Naive thymus-derived CD4-positive, alpha-beta T cell (primary cell): ENCODE measurements at regions of chr3 and their contacts with region 1.

Region 1: GRCh38 chr3:13479581-13480339 is at the start of gene HDAC11:
- DNase-seq: peak; percentile 93 to 98 (median 95)
- ATAC-seq: peak; percentile 98
- H3K4me3 ChIP-seq: peak within 1 kb of the TSS; percentile 97
- H3K4me3 Mint-ChIP-seq: peak within 1 kb of the TSS; percentile 90 to 97 (median 94)
- H3K27ac ChIP-seq: peak within 1 kb of the TSS; percentile 98
- H3K27ac Mint-ChIP-seq: peak within 1 kb of the TSS; percentile 82 to 97 (median 94)
- H3K4me1 ChIP-seq: peaks cover 8 to 15% of the 10 kb centered on the region in 2 donors
- H3K4me1 Mint-ChIP-seq: peaks cover 4 to 22% (median 15%) of the 10 kb centered on the region in 7 donors
- H3K27me3 ChIP-seq: no peaks in the 10 kb centered on the region
- H3K27me3 Mint-ChIP-seq: peaks cover 0 to 13% (median 0%) of the 10 kb centered on the region in 5 donors
- total RNA-seq, gene HDAC11: 1.2 to 8.0 (median 7.3) TPM

Region 2: DNA sequence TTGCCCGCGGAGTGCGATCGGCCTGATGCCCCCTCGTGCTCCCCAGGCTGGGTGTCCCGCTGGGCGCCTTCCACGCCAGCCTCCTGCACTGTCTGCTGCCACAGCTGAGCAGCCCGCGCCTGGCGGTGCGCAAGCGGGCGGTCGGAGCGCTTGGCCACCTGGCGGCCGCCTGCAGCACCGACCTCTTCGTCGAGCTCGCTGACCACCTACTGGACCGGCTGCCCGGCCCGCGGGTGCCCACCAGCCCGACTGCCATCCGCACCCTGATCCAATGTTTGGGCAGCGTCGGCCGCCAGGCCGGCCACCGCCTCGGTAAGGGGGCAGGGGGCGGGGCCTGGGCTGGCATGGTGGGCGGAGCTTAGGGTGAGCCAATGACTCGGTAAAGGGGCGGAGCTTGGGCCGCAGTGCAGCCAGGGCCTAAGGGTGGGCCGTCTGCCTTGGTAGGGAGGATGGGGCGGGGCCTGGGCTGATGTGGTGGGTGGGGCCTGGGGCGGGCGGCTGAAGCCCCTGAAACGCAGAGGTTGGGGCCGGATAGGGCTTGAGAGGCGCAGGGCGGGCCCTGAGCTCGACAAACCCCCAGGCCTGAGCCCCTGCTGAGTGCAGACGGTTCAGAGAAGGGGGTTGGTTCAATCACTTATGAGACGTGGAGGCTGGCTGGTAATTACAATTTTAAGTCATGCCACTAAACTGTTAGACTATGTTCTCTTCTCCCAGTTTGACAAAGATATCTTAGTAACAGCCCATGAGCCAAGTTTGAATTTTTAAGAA is 669.6 kb before region 1 on chr3:
- CTCF ChIA-PET with region 1: no interaction called
- POLR2A ChIA-PET with region 1: no interaction called
- intact Hi-C with region 1: loop called in 1 of 2 experiments (anchors 1 kb)
- DNase-seq: peak; percentile 89 to 98 (median 94)
- ATAC-seq: peak; percentile 99
- H3K4me3 ChIP-seq: peak overlapping the region; percentile 79
- H3K4me3 Mint-ChIP-seq: peak overlapping the region; percentile 63 to 82 (median 77)
- H3K27ac ChIP-seq: peak overlapping the region; percentile 68
- H3K27ac Mint-ChIP-seq: peak overlapping the region; percentile 23 to 85 (median 64)
- H3K4me1 ChIP-seq: peaks cover 3 to 7% of the 10 kb centered on the region in 2 donors
- H3K4me1 Mint-ChIP-seq: peaks cover 4 to 16% (median 12%) of the 10 kb centered on the region in 7 donors
- H3K27me3 ChIP-seq: no peaks in the 10 kb centered on the region
- H3K27me3 Mint-ChIP-seq: peaks cover 0 to 11% (median 0%) of the 10 kb centered on the region in 5 donors

Region 3: DNA sequence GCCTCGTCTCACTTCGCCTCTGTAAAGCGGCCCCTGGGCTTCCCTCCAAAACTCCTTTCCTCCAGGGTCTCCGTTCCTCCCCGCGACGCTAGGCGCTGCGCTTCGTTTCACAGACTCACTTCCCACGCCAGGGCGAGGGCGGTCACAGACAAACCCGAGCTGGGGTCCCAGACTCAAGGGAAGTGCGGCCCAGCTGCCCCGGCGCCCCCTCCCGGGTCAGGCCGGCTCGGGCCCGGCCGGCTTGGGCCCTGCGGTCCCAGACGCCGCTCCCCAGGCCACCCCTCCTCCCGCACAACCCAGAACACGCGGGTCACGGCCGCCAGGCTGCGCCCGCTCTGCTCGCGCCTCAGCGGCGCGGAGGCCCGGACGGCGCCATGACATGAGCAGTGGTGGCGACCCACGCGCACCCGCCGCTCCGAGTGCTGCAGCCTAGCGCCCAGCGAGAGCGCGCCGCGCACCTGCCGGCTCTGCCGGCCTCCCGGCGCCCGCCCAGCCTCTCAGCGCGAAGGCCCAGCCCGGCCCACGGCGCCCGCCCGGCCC is 60.2 kb before region 1 on chr3:
- CTCF ChIA-PET with region 1: no interaction called
- POLR2A ChIA-PET with region 1: interaction called, 4 read pairs
- intact Hi-C with region 1: loop called (anchors 1 to 2 kb)
- DNase-seq: peak; percentile 58 to 69 (median 64)
- ATAC-seq: peak; percentile 74
- H3K4me3 ChIP-seq: peak overlapping the region; percentile 70
- H3K4me3 Mint-ChIP-seq: peak overlapping the region; percentile 77 to 100 (median 90)
- H3K27ac ChIP-seq: peak overlapping the region; percentile 96
- H3K27ac Mint-ChIP-seq: peak overlapping the region; percentile 83 to 97 (median 92)
- H3K4me1 ChIP-seq: peaks cover 55 to 60% of the 10 kb centered on the region in 2 donors
- H3K4me1 Mint-ChIP-seq: peaks cover 41 to 81% (median 69%) of the 10 kb centered on the region in 7 donors
- H3K27me3 ChIP-seq: no peaks in the 10 kb centered on the region
- H3K27me3 Mint-ChIP-seq: no peaks in the 10 kb centered on the region

Region 4: GRCh38 chr3:13427662-13428603 is 51.8 kb before region 1 on chr3:
- CTCF ChIA-PET with region 1: no interaction called
- POLR2A ChIA-PET with region 1: interaction called, 5 read pairs
- intact Hi-C with region 1: loop called in 1 of 2 experiments (anchors 2 kb)
- DNase-seq: peak in 7 of 9 donors; percentile 61 to 73 (median 66)
- ATAC-seq: peak; percentile 95
- H3K4me3 ChIP-seq: peak overlapping the region; percentile 6
- H3K4me3 Mint-ChIP-seq: peak overlapping the region; percentile 22 to 82 (median 68)
- H3K27ac ChIP-seq: peak overlapping the region; percentile 71
- H3K27ac Mint-ChIP-seq: peak overlapping the region; percentile 69 to 98 (median 91)
- H3K4me1 ChIP-seq: peaks cover 10 to 35% of the 10 kb centered on the region in 2 donors
- H3K4me1 Mint-ChIP-seq: peaks cover 18 to 55% (median 42%) of the 10 kb centered on the region in 7 donors
- H3K27me3 ChIP-seq: no peaks in the 10 kb centered on the region
- H3K27me3 Mint-ChIP-seq: no peaks in the 10 kb centered on the region

Region 5: DNA sequence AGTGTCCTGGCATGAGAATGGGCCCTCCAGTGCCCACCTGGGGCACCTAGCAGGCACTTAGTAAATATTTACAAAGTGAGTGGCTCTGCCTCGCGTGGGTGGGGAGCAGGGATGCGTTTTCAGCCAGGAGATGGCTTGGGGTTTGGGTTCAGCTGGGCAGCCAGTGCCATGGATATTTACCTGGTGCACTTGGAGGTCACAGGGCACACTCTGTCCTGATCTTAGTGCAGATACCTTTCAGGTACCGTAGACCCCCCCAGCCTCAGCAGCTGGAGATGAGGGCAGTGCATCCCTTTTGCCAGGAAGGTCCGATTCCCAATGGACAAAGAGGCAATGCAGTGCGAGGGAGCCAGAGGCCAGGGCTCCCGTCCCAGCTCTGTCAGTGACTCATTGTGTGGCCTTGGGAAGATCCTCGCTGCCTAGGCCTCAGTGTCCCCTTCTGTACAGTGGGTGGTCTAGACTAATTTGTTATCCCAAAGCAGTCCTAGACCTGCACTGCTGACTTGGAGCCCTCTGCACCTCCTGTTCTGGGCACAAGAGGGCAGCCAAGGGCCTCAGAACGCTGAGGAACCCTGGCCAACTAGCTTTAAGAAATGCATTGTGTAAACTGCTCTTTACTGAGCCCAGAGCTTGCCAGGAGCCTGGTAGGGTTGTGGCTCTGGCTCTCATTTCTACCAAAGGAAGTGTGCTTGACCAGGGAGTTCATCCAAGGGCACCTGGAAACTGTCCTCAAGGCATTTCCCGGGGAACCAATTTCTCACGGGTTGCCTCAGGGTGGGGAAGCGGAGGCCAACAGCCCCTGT is 16.4 kb after region 1 on chr3:
- CTCF ChIA-PET with region 1: no interaction called
- POLR2A ChIA-PET with region 1: interaction called, 4 read pairs
- intact Hi-C with region 1: loop called in 1 of 2 experiments (anchors 1 kb)
- DNase-seq: peak; percentile 47 to 73 (median 66)
- ATAC-seq: peak; percentile 89
- H3K4me3 ChIP-seq: no peak overlapping the region
- H3K4me3 Mint-ChIP-seq: no peak overlapping the region
- H3K27ac ChIP-seq: no peak overlapping the region
- H3K27ac Mint-ChIP-seq: no peak overlapping the region
- H3K4me1 ChIP-seq: no peaks in the 10 kb centered on the region
- H3K4me1 Mint-ChIP-seq: peaks cover 0 to 7% (median 3%) of the 10 kb centered on the region in 7 donors
- H3K27me3 ChIP-seq: no peaks in the 10 kb centered on the region
- H3K27me3 Mint-ChIP-seq: no peaks in the 10 kb centered on the region

Region 6: DNA sequence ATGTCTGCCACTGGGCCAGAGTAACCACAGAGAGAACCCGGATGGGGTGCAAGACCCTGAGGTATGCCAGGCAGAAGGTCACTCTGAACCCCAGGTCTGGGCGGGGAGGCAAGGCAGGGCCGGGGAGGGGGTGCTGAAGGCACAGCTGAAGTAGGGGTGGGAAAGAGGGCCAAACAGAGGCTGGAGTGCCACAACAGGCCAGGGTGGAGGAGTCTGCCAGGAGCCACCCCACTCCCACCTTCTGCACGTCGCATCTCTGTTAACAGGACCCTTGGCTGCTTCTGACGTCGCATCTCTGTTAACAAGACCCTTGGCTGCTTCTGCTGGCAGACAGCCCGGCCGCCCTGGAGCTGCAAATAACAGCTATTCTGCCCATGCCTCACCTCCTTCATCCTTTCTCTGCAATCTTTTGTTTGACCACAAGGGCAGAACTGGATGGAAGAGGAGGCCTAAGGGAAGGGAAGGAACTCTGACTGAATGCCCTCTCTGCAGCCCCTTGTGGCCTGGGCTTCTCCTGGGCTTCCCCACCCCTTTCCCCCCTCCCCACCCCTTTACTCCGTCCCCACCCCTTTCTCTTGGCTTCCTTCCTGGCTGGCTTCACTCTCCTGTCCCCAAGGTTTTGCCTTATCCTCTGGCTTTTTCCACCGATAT is 48.6 kb after region 1 on chr3:
- CTCF ChIA-PET with region 1: no interaction called
- POLR2A ChIA-PET with region 1: no interaction called
- intact Hi-C with region 1: no loop called
- DNase-seq: no peak
- ATAC-seq: no peak
- H3K4me3 ChIP-seq: no peak overlapping the region
- H3K4me3 Mint-ChIP-seq: no peak overlapping the region
- H3K27ac ChIP-seq: no peak overlapping the region
- H3K27ac Mint-ChIP-seq: no peak overlapping the region
- H3K4me1 ChIP-seq: no peaks in the 10 kb centered on the region
- H3K4me1 Mint-ChIP-seq: peaks cover 0 to 3% (median 0%) of the 10 kb centered on the region in 7 donors
- H3K27me3 ChIP-seq: no peaks in the 10 kb centered on the region
- H3K27me3 Mint-ChIP-seq: peaks cover 0 to 12% (median 0%) of the 10 kb centered on the region in 5 donors

Region 7: DNA sequence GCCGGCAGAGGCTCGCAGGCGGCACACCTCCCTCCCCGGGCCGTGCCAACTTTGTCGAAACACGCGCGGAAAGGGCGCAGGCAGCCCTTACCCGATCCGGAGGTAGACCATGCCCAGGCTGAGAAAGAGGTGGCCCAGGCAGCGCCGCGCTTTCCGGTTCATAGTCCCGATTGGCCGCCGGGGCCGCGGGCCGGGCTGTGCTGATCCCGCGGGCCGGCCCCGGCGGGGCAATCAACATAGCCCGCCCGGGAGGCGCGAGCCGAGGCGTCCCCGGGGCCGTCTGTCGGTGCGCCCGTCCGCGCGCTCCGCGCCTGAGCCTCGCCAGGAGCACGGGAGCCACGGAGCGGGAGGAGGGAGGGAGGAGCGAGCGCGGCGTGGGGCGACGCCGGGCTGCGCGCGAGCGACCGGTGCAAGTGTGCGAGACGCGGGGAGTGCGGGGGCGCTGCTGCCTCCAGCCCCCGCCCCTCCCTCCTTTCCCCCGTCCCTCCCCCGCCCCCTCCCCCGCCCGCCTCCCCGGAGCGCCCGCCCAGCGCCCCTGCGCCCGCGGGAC is 400.0 kb after region 1 on chr3 and contains the start of gene WNT7A:
- CTCF ChIA-PET with region 1: interaction called, 3 read pairs
- POLR2A ChIA-PET with region 1: interaction called, 7 read pairs
- intact Hi-C with region 1: loop called in 1 of 2 experiments (anchors 1 kb)
- DNase-seq: peak in 5 of 9 donors; percentile 33 to 70 (median 49)
- ATAC-seq: peak; percentile 38
- H3K4me3 ChIP-seq: peak within 1 kb of the TSS; percentile 75
- H3K4me3 Mint-ChIP-seq: peak within 1 kb of the TSS; percentile 50 to 95 (median 92)
- H3K27ac ChIP-seq: peak within 1 kb of the TSS; percentile 75
- H3K27ac Mint-ChIP-seq: peak within 1 kb of the TSS in 7 of 9 donors; percentile 45 to 92 (median 82)
- H3K4me1 ChIP-seq: peaks cover 5 to 6% of the 10 kb centered on the region in 2 donors
- H3K4me1 Mint-ChIP-seq: peaks cover 0 to 29% (median 23%) of the 10 kb centered on the region in 7 donors
- H3K27me3 ChIP-seq: peaks cover 0 to 6% of the 10 kb centered on the region in 2 donors
- H3K27me3 Mint-ChIP-seq: peaks cover 0 to 78% (median 34%) of the 10 kb centered on the region in 5 donors
- total RNA-seq, gene WNT7A: 0.15 to 21.8 (median 18.8) TPM

Region 8: DNA sequence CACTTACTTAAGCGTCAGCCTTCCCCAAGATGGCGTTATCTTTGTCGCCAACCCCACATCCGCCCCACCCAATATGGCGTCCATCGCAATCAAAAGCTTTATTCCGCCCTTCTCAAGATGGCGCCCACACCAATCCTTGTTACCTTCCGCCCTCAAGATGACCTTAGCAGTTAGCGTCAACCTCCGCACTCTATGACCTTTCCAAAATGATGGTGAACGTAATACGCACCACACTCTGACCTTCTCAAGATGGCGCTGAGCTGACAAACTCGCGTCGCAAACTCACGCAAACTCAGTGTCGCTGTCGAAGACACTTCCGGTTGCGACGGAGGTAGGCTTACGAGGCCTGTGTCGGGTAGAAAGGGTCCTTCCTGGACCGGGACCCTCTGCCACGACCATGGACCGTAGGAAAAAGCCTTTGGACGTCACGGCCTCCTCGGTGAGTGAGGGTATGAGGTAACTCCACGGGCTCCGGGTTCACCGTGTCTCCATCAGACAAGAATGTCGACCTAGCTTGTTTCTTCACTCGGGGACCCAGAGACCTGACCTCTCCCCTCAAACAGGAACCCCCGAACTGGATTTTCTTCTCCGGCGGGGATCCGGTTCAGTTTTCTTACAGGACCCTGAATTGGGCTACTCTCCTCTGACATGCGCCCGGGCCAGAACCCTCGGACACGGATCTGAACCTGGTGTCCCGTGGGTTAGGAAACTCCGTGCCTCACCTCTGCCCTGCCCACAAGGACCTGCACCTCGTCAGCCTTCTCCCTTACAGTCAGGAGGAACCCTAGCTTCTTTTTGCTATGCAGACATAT is 1171.9 kb after region 1 on chr3 and contains the start of gene CCDC174:
- CTCF ChIA-PET with region 1: no interaction called
- POLR2A ChIA-PET with region 1: no interaction called
- intact Hi-C with region 1: loop called in 1 of 2 experiments (anchors 1 kb)
- DNase-seq: peak; percentile 84 to 98 (median 96)
- ATAC-seq: peak; percentile 99
- H3K4me3 ChIP-seq: peak within 1 kb of the TSS; percentile 90
- H3K4me3 Mint-ChIP-seq: peak within 1 kb of the TSS; percentile 84 to 100 (median 96)
- H3K27ac ChIP-seq: peak within 1 kb of the TSS; percentile 94
- H3K27ac Mint-ChIP-seq: peak within 1 kb of the TSS; percentile 92 to 100 (median 98)
- H3K4me1 ChIP-seq: peaks cover 21 to 25% of the 10 kb centered on the region in 2 donors
- H3K4me1 Mint-ChIP-seq: peaks cover 25 to 80% (median 66%) of the 10 kb centered on the region in 7 donors
- H3K27me3 ChIP-seq: no peaks in the 10 kb centered on the region
- H3K27me3 Mint-ChIP-seq: peaks cover 0 to 2% (median 0%) of the 10 kb centered on the region in 5 donors
- total RNA-seq, gene CCDC174: 21.6 to 59.2 (median 46.2) TPM